ENCODE measurements at regions of chr2 and their contacts with region 1.

Region 1: DNA sequence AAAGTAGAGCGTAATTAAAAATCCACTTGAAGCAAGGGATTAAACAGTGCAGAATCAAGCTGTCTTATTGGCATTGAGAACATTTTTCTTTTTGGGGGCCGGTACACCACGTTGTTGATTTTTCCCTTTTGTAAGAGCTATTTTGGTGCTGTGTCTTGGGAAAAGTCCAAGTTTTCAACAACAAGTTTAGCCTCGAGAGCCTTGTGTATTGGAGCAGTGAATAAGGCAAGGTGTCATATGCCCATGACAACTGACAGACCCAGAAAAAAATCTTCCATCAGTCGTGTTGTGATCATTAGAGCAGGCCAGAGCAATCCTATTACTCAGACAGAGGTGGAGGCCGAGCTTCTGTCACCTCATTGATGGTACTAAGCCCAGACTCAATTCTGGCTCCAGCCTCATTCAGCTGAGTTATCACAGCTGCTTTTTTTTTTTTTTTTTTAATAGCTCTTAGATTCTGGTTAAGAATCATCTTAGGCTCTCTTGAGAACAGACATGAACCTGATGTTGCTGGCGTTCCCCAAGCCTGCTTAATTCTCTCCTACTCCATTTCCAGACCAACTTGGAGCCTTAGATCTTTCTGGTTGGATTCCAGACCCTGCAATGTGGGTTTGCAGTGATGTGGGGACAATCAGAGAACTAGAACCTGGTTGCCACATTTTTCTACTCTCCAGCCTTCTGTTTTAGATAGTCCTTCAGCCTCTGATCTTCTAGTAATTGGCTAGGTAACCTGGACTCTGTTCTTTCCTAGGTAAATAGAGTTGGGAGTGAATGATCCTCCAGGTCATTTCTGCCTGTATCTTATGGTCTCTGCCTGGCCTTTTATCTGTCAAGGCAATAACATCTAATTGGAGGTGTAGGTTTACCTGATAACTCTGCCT is 43.1 kb downstream of the MOGAT1 start:
- DNase-seq: peak in 3 of 4 donors; percentile 22 to 34 (median 28)
- ATAC-seq: peak; percentile 52
- H3K4me3 ChIP-seq: no peak overlapping the region
- H3K27ac ChIP-seq: peak overlapping the region in 1 of 4 donors; percentile 7
- H3K4me1 ChIP-seq: peaks cover 13% of the 10 kb centered on the region
- H3K27me3 ChIP-seq: no peaks in the 10 kb centered on the region
- CTCF ChIP-seq: no peak
- POLR2A ChIP-seq: no peak

Region 2: DNA sequence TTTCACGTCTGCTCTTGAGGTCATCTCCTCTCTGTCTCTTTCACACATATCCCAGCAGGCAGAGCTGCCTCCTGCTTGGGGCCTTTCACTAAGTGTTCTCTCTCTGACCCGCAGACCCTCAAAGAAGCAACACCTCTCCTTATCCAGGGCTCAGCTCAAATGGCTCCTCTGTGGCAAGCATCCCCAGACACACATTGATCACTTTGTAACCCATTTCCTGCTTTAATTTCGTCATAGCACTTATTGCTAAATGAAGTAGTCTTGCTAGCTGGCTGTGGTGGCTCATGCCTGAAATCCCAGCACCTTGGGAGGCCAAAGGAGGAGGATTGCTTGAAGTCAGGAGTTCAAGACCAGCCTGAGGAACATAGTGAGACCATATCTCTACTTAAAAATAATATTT is 248.9 kb before region 1 on chr2:
- intact Hi-C with region 1: no loop called
- DNase-seq: no peak
- ATAC-seq: no peak
- H3K4me3 ChIP-seq: no peak overlapping the region
- H3K27ac ChIP-seq: no peak overlapping the region
- H3K4me1 ChIP-seq: no peaks in the 10 kb centered on the region
- H3K27me3 ChIP-seq: no peaks in the 10 kb centered on the region
- CTCF ChIP-seq: no peak
- POLR2A ChIP-seq: no peak

Region 3: DNA sequence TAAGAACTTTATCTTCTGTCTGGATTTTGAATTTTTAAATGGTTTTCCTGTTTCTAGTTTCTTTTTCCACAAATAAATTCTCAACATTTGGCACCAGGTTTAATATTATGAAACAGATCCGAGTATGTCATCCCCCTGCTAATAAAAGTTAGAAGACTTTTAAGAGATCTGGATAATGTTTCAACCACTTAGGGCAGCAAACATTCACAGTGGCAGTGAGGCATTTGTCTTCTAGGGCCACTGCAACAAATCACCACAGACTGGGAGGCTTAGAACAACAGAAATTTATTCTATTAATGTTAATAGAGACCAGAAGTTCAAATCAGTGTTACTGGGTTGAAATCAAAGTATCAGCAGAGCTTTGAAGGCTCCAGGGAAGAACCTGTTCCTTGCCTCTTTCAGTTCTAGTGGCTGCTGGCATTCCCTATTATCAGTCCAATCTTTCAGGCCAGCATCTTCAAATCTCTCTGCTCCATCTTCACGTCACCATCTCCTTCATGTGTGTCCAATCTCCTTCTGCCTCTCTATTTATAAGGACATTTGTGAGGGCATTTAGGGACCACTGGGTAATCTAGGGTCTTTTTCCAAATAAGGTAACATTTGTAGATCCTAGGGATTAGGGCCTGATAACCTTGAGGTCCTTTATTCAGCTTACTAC is 169.6 kb after region 1 on chr2:
- intact Hi-C with region 1: loop called (anchors 10 kb)
- DNase-seq: no peak
- ATAC-seq: no peak
- H3K4me3 ChIP-seq: no peak overlapping the region
- H3K27ac ChIP-seq: no peak overlapping the region
- H3K4me1 ChIP-seq: peaks cover 39% of the 10 kb centered on the region
- H3K27me3 ChIP-seq: no peaks in the 10 kb centered on the region
- CTCF ChIP-seq: no peak
- POLR2A ChIP-seq: no peak

Measured in body of pancreas (tissue), 4 donors.